Activated CD4-positive, alpha-beta T cell treated with anti-CD3 and anti-CD28 coated beads, Interleukin-2, amount 10 ng/mL, durations not matched to agents 7 days and 5 days (primary cell): ENCODE measurements at regions of chr17 and their contacts with region 1.

Region 1: GRCh38 chr17:62722625-62723024 is 85.5 kb downstream of the MARCHF10 start:
- DNase-seq: no peak
- H3K4me3 Mint-ChIP-seq: no peak overlapping the region
- H3K27ac Mint-ChIP-seq: no peak overlapping the region
- H3K4me1 Mint-ChIP-seq: peaks cover 19% of the 10 kb centered on the region
- H3K27me3 Mint-ChIP-seq: peaks cover 70% of the 10 kb centered on the region

Region 2: DNA sequence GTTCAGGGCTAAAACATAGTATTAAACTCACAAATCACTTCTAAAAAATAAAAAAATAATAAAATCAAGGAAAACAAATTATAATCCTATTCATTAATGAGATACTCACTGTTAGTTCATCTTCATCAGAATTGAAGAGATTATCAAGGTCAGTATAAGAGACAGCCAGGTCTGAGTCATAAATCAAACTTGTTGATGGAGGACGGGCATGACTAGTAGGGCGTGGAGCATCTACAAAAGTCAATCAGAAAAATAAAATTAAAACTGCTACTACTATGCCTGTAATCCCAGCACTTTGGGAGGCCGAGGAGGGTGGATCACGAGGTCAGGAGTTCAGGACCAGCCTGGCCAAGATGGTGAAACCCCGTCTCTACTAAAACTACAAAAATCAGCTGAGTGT is 735.7 kb before region 1 on chr17:
- CTCF ChIA-PET with region 1: no interaction called
- POLR2A ChIA-PET with region 1: no interaction called
- DNase-seq: no peak
- H3K4me3 Mint-ChIP-seq: no peak overlapping the region
- H3K27ac Mint-ChIP-seq: no peak overlapping the region
- H3K4me1 Mint-ChIP-seq: no peaks in the 10 kb centered on the region
- H3K27me3 Mint-ChIP-seq: no peaks in the 10 kb centered on the region

Region 3: GRCh38 chr17:62965686-62966425 is 243.2 kb after region 1 on chr17 and contains the start of gene TANC2:
- CTCF ChIA-PET with region 1: no interaction called
- POLR2A ChIA-PET with region 1: interaction called, 11 read pairs
- DNase-seq: peak; percentile 81
- H3K4me3 Mint-ChIP-seq: peak within 1 kb of the TSS; percentile 82
- H3K27ac Mint-ChIP-seq: peak within 1 kb of the TSS; percentile 92
- H3K4me1 Mint-ChIP-seq: peaks cover 28% of the 10 kb centered on the region
- H3K27me3 Mint-ChIP-seq: peaks cover 54% of the 10 kb centered on the region
- total RNA-seq, gene TANC2: 9.8 to 10.1 TPM

Region 4: GRCh38 chr17:63008114-63008513 is 285.5 kb after region 1 on chr17:
- CTCF ChIA-PET with region 1: no interaction called
- POLR2A ChIA-PET with region 1: no interaction called
- DNase-seq: no peak
- H3K4me3 Mint-ChIP-seq: no peak overlapping the region
- H3K27ac Mint-ChIP-seq: no peak overlapping the region
- H3K4me1 Mint-ChIP-seq: peaks cover 2% of the 10 kb centered on the region
- H3K27me3 Mint-ChIP-seq: no peaks in the 10 kb centered on the region